ENCODE measurements at regions of chr11 and their contacts with region 1.

Region 1: DNA sequence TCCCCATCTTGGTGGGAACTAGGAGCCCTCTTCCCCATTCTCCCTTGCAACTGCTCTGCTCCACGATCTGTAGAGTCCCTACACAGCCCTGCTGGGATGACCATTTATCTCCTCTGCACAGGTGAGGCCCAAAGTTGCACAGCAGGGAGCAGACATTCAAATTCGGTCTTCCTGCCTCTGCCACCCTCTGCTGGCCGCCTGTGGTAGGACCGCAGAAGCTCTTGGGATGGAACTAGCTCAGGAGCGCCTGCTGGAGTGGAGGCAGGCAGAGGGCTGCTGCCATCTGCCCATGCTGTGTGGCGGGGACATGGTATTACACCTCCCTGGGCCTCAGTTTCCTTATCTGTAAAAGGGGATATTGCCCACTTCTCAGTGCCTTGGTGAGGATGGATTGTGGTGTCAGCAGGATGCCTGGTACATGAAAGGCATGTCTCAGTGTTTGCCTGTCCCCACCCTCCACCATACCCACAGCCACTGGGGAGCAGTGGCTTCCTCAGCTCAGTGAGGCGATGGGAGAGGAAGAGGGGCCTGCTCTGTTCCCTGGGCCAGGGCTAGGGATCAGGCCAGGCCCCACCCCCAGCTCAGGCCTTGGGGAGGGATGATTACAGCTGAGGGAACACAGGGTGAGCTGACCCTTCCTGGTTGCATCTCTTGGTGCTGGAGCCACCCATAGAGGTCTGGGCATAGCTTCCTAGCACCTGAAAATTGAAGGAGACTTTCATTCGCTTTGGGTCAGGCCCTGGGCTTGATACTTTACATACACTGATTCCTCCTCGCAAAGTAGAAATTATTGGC is 11.3 kb upstream of the OMP start:
- DNase-seq: peak; percentile 89
- H3K4me3 Mint-ChIP-seq: no peak overlapping the region
- H3K27ac Mint-ChIP-seq: no peak overlapping the region
- H3K4me1 Mint-ChIP-seq: peaks cover 5% of the 10 kb centered on the region
- H3K27me3 Mint-ChIP-seq: no peaks in the 10 kb centered on the region

Region 2: DNA sequence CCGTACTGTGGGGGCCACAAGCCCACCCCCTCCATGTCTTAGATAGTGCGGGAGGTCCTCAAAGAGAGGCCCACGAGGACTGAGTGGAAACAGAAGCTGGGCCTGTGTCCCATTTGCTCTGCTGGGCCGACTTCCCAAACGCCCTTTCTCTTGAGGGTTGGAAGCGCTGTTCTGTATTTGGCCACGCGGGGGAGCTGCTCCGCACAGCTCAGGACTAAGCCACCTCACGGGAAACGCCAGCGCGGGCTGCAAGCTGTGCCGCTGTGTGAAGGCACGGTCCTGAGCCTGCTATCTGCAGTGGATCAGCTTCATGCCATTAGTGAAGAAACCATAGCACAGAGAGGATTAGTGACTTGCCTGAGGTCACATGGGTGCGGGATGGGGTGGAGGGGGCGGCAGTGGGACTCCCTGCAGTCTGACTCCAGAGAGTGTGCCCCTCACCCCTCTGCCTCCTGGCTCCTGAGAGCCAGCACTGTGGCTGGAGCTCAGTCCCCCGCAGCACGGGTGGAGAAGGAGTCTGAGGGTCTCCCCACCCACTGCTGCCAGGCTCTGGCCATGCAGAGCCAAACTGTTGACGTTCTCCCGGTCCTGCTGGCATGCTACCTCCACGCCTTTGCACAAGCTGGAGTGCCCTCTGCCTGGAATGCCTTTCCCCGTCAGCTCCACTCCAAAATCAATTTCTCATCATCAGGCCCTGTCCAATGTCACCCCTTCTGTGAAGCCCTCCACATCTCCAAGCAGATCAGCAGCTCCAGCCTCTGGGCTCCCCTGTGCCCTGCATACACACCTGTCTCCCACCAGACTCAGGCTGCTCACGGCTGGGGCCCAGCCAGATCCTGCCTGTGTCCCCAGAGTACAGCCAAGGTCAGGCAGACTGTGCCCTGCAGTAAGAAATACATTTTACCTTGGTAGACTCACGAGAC is 369.3 kb before region 1 on chr11:
- CTCF ChIA-PET with region 1: interaction called, 3 read pairs
- intact Hi-C with region 1: loop called (anchors 1 kb)
- DNase-seq: peak; percentile 86
- H3K4me3 Mint-ChIP-seq: peak overlapping the region; percentile 13
- H3K27ac Mint-ChIP-seq: no peak overlapping the region
- H3K4me1 Mint-ChIP-seq: peaks cover 5% of the 10 kb centered on the region
- H3K27me3 Mint-ChIP-seq: peaks cover 16% of the 10 kb centered on the region

Region 3: GRCh38 chr11:77053217-77054015 is 37.9 kb before region 1 on chr11:
- CTCF ChIA-PET with region 1: interaction called, 81 read pairs
- intact Hi-C with region 1: no loop called
- DNase-seq: no peak
- H3K4me3 Mint-ChIP-seq: no peak overlapping the region
- H3K27ac Mint-ChIP-seq: no peak overlapping the region
- H3K4me1 Mint-ChIP-seq: no peaks in the 10 kb centered on the region
- H3K27me3 Mint-ChIP-seq: no peaks in the 10 kb centered on the region

Region 4: DNA sequence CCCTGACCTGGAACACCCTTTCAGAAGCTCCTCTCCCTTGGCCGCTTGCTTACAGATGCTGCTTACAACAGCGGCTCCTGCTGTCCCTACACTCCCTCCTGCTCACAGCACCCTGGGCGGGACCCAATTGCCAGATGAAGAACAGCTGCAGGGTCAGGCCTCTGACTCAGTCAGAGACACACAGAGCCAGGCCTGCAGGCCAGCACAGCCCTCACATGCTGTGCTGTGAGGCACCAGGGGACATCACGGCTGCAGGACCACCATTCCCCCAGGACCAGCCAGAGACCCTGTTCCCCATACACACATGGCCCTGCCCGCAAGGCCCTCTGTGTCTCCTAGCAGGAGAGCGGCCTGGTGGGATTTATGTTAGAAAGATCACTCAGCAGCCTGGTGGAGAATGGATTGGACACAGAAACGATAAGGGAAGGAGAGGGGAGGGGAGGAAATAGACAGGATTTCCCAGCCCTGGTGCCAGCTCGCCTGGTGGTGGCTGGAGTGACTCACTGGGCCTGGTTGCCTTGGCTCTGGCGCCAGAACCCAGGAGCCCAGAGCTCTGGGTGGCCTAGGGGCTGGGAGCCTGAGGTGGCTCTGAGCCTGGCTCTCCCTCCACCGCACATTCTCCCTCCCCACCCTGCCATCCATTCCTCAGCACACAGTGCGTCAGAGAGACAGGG is 17.9 kb before region 1 on chr11:
- CTCF ChIA-PET with region 1: interaction called, 19 read pairs
- intact Hi-C with region 1: no loop called
- DNase-seq: no peak
- H3K4me3 Mint-ChIP-seq: no peak overlapping the region
- H3K27ac Mint-ChIP-seq: no peak overlapping the region
- H3K4me1 Mint-ChIP-seq: peaks cover 13% of the 10 kb centered on the region
- H3K27me3 Mint-ChIP-seq: no peaks in the 10 kb centered on the region

Region 5: GRCh38 chr11:77113382-77114088 is 22.2 kb after region 1 on chr11:
- CTCF ChIA-PET with region 1: interaction called, 12 read pairs
- intact Hi-C with region 1: no loop called
- DNase-seq: peak; percentile 56
- H3K4me3 Mint-ChIP-seq: no peak overlapping the region
- H3K27ac Mint-ChIP-seq: peak overlapping the region; percentile 18
- H3K4me1 Mint-ChIP-seq: no peaks in the 10 kb centered on the region
- H3K27me3 Mint-ChIP-seq: no peaks in the 10 kb centered on the region